RWPE1 (cell line): ENCODE measurements at regions of chr11 and their contacts with region 1.

Region 1: GRCh38 chr11:65593518-65594298 is 1.9 kb downstream of the KCNK7 start:
- DNase-seq: no peak
- H3K27ac ChIP-seq: peak overlapping the region; percentile 67
- CTCF ChIP-seq: peak; percentile 69

Region 2: GRCh38 chr11:65569973-65570918 is 23.5 kb before region 1 on chr11 and contains the start of gene ZNRD2:
- CTCF ChIA-PET with region 1: interaction called, 11 read pairs
- POLR2A ChIA-PET with region 1: no interaction called
- DNase-seq: peak; percentile 94
- H3K27ac ChIP-seq: peak within 1 kb of the TSS; percentile 98
- CTCF ChIP-seq: peak; percentile 71

Region 3: DNA sequence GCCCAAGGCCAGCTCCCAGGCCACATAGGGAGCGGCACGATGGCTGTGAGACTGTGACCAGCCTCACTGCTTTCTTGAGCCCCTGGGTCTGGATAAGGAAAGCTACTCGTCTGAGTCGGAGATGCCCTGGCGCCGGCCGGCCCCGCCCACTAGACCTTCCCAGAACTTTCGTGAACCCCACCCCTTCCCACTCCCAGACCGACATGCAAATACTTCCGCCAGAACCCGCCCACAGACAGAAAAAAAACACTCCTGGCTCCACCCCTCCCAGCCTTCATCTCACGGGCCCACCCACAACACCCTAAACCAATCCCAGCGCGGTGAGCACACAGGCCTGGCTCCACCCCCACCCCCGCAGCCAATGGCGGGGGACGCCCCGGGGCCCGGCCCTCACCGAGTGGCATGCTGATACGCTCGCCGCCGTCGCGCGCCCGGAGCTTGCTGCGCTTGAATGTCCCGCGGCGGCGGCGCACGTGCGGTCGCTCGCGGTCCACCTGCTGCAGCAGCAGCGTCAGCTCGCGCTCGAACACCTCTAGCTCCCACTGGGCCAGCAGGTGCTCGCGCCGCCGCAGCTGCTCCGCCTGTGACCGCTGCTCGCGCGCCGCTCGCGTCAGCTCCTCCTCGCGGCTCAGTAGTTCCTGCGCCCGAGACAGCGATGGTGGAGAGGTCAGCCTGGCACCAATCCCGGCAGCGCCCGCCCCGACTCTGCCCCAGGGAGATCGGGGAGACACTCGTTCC is 13.3 kb after region 1 on chr11:
- CTCF ChIA-PET with region 1: interaction called, 16 read pairs
- POLR2A ChIA-PET with region 1: interaction called, 3 read pairs
- DNase-seq: peak; percentile 90
- H3K27ac ChIP-seq: peak overlapping the region; percentile 93
- CTCF ChIP-seq: no peak